ENCODE measurements at regions of chr3 and their contacts with region 1.

Region 1: DNA sequence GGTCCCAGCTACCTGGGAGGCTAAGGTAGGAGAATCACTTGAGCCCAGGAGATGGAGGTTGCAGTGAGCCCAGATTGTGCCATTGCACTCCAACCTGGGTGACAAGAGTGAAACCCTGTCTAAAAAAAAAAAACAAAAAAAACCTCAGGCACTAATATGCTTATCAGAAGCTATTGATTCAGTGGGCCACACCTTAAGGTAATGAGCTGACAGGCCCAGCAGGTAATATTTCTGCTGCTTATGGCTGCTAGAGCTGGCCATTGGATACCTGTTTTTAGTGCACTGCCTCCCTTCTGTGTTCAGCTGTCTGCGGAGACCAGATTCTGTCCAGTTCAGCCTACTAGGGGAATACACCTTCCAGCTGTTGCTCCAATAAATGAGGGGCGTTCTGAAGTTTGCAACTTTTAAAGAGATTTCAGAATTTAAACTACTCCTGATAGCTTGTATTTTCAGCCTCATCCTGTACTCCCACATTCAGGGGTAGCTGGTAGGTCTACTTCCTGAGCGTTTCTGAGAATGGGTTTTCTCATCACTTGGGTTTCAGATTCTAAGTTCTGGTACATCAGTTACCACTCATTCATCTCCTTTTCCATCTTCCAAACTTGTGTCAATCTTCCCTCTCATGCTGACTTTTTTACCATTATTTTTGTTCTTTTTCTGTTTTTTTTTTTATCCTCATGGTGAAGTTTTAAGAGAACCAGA is 69.0 kb downstream of the ATP11B start:
- DNase-seq: no peak
- H3K4me3 ChIP-seq: no peak overlapping the region
- H3K27ac ChIP-seq: no peak overlapping the region
- H3K4me1 ChIP-seq: no peaks in the 10 kb centered on the region
- H3K27me3 ChIP-seq: no peaks in the 10 kb centered on the region
- CTCF ChIP-seq: no peak

Region 2: GRCh38 chr3:182710557-182711157 is 151.7 kb before region 1 on chr3:
- CTCF ChIA-PET with region 1: no interaction called
- POLR2A ChIA-PET with region 1: no interaction called
- intact Hi-C with region 1: no loop called
- DNase-seq: peak; percentile 53
- H3K4me3 ChIP-seq: no peak overlapping the region
- H3K27ac ChIP-seq: no peak overlapping the region
- H3K4me1 ChIP-seq: no peaks in the 10 kb centered on the region
- H3K27me3 ChIP-seq: peaks cover 9% of the 10 kb centered on the region
- CTCF ChIP-seq: peak; percentile 79

Region 3: GRCh38 chr3:182755308-182755707 is 107.0 kb before region 1 on chr3:
- CTCF ChIA-PET with region 1: no interaction called
- POLR2A ChIA-PET with region 1: interaction called, 12 read pairs
- intact Hi-C with region 1: no loop called
- DNase-seq: no peak
- H3K4me3 ChIP-seq: no peak overlapping the region
- H3K27ac ChIP-seq: no peak overlapping the region
- H3K4me1 ChIP-seq: peaks cover 7% of the 10 kb centered on the region
- H3K27me3 ChIP-seq: no peaks in the 10 kb centered on the region
- CTCF ChIP-seq: no peak

Region 4: GRCh38 chr3:182829761-182830405 is 32.4 kb before region 1 on chr3:
- CTCF ChIA-PET with region 1: no interaction called
- POLR2A ChIA-PET with region 1: no interaction called
- intact Hi-C with region 1: no loop called
- DNase-seq: no peak
- H3K4me3 ChIP-seq: no peak overlapping the region
- H3K27ac ChIP-seq: no peak overlapping the region
- H3K4me1 ChIP-seq: no peaks in the 10 kb centered on the region
- H3K27me3 ChIP-seq: no peaks in the 10 kb centered on the region
- CTCF ChIP-seq: no peak